Heart left ventricle (tissue), 16 donors: ENCODE measurements at regions of chr19 and their contacts with region 1.

Region 1: GRCh38 chr19:35332817-35333216 is 3.8 kb downstream of the CD22 start:
- DNase-seq: no peak
- ATAC-seq: no peak
- H3K4me3 ChIP-seq: no peak overlapping the region
- H3K27ac ChIP-seq: no peak overlapping the region
- H3K4me1 ChIP-seq: no peaks in the 10 kb centered on the region
- H3K27me3 ChIP-seq: peaks cover 0 to 48% (median 9%) of the 10 kb centered on the region in 9 donors
- CTCF ChIP-seq: no peak
- POLR2A ChIP-seq: no peak

Region 2: GRCh38 chr19:35318650-35319448 is 14.0 kb before region 1 on chr19:
- intact Hi-C with region 1: loop called in 1 of 10 experiments (anchors 1 kb)
- DNase-seq: peak in 3 of 5 donors; percentile 55 to 81 (median 75)
- ATAC-seq: peak; percentile 47 to 87 (median 82)
- H3K4me3 ChIP-seq: no peak overlapping the region
- H3K27ac ChIP-seq: peak overlapping the region in 1 of 12 donors; percentile 78
- H3K4me1 ChIP-seq: peaks cover 0 to 39% (median 8%) of the 10 kb centered on the region in 12 donors
- H3K27me3 ChIP-seq: peaks cover 0 to 3% (median 0%) of the 10 kb centered on the region in 9 donors
- CTCF ChIP-seq: no peak
- POLR2A ChIP-seq: no peak